Brain microvascular endothelial cell (primary cell): ENCODE measurements at regions of chr2 and their contacts with region 1.

Region 1: GRCh38 chr2:55419679-55420438 is at the start of gene CCDC88A:
- DNase-seq: peak; percentile 97
- H3K4me3 ChIP-seq: peak within 1 kb of the TSS; percentile 85
- H3K27ac ChIP-seq: peak within 1 kb of the TSS; percentile 58
- H3K27me3 ChIP-seq: no peaks in the 10 kb centered on the region
- CTCF ChIP-seq: peak; percentile 30

Region 2: DNA sequence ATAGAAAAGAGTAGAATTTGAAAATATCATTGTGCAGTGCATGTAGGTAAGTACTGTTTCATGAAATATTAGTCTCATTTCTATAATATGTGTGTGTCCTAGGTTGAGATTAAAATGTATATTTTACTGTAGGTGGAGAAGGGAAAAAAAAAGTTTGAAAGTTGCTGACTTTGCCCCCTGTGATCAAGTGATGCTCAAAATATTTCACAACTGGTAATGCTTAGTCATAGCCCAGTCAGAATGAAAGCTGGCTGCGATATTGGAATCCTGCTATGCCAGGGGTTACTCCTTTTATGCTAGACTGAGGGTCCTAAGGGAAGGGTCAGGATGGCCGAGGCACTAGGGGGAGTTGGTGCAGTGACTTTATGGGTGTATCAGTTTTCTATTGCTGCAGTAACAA is 80.2 kb after region 1 on chr2:
- in situ Hi-C with region 1: loop called (anchors 10 kb)
- DNase-seq: peak; percentile 40
- H3K4me3 ChIP-seq: no peak overlapping the region
- H3K27ac ChIP-seq: no peak overlapping the region
- H3K27me3 ChIP-seq: no peaks in the 10 kb centered on the region
- CTCF ChIP-seq: no peak

Region 3: GRCh38 chr2:55721596-55722215 is 301.8 kb after region 1 on chr2:
- in situ Hi-C with region 1: no loop called
- DNase-seq: no peak
- H3K4me3 ChIP-seq: no peak overlapping the region
- H3K27ac ChIP-seq: no peak overlapping the region
- H3K27me3 ChIP-seq: no peaks in the 10 kb centered on the region
- CTCF ChIP-seq: no peak